Activated CD4-positive, alpha-beta T cell treated with anti-CD3 and anti-CD28 coated beads for 36 hours (primary cell): ENCODE measurements at regions of chr12 and their contacts with region 1.

Region 1: DNA sequence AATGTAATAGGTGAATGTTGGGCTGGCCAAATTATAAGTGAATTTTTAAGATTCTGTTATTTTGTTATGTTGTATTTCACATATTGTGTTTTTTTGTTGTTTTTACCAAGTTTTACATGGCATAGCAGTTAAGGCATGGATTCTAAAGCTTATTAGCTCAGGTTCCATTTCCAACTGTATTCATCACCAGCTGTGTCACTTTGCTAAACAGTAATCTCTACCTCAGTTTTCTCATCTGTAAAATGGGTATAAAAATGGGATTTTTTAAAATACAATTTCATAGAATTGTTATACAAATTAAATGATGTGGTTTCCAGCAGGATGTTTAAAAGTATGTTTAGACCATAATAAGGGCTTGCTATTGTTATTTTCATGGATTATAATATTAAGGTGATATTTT is 512.2 kb downstream of the SLC16A7 start:
- DNase-seq: no peak
- ATAC-seq: no peak
- H3K4me3 Mint-ChIP-seq: no peak overlapping the region
- H3K27ac Mint-ChIP-seq: no peak overlapping the region
- H3K4me1 Mint-ChIP-seq: no peaks in the 10 kb centered on the region
- H3K27me3 Mint-ChIP-seq: no peaks in the 10 kb centered on the region

Region 2: GRCh38 chr12:60148109-60148508 is 40.1 kb after region 1 on chr12:
- CTCF ChIA-PET with region 1: no interaction called
- POLR2A ChIA-PET with region 1: no interaction called
- intact Hi-C with region 1: loop called in 1 of 2 experiments (anchors 1 kb)
- DNase-seq: no peak
- ATAC-seq: no peak
- H3K4me3 Mint-ChIP-seq: no peak overlapping the region
- H3K27ac Mint-ChIP-seq: no peak overlapping the region
- H3K4me1 Mint-ChIP-seq: no peaks in the 10 kb centered on the region
- H3K27me3 Mint-ChIP-seq: no peaks in the 10 kb centered on the region